ENCODE measurements at regions of chr6 and their contacts with region 1.

Region 1: GRCh38 chr6:53794720-53795253 is at the start of gene LRRC1:
- DNase-seq: peak; percentile 94
- ATAC-seq: peak; percentile 95
- total RNA-seq, gene LRRC1: 19.5 TPM

Region 2: GRCh38 chr6:53854843-53855567 is 60.2 kb after region 1 on chr6:
- intact Hi-C with region 1: loop called (anchors 10 kb)
- DNase-seq: no peak
- ATAC-seq: no peak

Region 3: DNA sequence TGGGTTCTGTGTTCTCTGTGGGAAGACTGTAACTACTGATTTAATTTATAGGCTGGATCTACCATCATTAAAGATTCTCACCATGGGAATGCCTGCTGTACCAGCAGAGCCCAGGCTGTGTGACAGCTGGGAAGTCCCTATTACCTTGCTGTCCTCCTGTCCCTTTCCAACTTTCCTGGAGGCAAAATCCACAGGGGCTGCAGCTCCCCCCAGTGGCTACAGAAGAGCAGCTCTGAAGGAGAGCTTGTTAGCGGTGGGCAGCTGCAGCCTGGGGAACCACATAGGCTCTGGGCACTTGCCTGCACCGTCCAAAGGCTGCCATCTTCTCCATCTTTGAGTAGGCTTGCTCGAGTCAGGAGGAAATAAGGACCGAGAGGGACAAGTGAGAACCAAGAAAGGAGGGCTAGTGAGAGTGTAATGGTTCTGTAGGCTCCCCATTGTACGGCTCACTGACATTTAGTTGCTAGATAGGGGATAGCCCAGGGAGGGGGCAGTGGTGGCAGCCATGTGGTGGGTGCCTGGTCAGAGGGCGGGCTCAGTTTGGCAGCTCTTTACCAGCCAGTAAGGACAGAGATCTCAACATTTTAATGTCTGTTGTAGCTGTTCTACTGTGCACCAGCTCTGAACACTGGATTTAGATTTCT is 161.4 kb after region 1 on chr6:
- intact Hi-C with region 1: loop called (anchors 10 kb)
- DNase-seq: peak; percentile 85
- ATAC-seq: peak; percentile 90

Region 4: DNA sequence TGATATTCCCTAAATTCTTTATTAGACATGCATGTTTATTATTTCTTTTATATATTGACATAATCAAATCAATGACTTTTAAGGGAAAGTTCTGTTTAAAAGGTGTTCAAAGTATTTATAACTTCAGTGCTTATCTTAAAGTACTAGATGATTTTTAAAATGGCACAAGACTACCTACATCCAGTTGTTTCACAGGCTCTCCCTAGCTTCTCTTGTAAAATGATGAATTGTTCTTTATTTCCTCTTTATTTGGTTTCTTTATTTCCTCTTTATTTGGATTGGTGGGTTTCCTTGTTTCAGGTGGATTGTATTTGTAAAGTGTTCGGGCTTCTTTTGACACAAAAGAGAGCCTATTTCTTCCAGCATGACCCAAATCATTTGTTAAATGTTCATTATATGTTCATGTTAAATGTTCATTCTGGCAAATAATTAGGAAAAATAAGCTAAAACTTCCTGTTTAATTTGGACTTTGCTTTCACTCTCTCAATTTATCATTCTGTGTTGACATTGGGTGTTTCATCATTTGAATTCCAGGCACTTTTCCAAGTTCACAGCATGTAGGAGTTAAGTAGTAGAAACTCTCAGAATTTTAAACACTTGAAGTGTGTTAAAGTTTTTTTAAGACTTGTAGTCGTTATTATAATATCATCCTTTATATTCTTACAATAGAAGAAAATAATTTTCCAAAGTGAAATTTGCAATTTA is 341.0 kb after region 1 on chr6:
- intact Hi-C with region 1: no loop called
- DNase-seq: no peak
- ATAC-seq: no peak

Measured in sciatic nerve (tissue), 2 donors.